ENCODE measurements at regions of chr2 and their contacts with region 1.

Region 1: GRCh38 chr2:40760071-40760666 is 308.3 kb upstream of the SLC8A1 start:
- DNase-seq: peak; percentile 80
- ATAC-seq: peak; percentile 96
- H3K4me3 ChIP-seq: no peak overlapping the region
- H3K27ac ChIP-seq: no peak overlapping the region
- H3K4me1 ChIP-seq: no peaks in the 10 kb centered on the region
- H3K27me3 ChIP-seq: no peaks in the 10 kb centered on the region
- CTCF ChIP-seq: peak; percentile 94

Region 2: DNA sequence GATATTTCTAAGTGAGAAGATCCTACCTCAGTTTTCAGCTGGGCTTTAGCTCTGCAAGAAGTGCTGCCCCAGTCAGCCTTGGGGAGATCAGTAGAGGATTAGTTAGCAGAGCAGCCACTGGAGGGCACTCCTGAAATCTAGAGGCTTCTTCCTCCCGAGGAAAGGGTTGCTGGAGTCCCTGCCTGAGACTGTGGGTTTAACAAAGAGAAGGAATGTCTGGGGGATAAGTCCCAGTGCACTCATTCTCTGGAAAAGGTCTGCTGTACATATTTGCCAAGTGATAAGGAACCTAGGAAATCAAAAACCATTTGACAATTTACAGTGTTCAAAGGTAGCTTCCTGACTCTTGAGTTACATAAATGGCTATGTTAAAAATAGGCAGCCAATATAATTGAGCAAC is 515.5 kb before region 1 on chr2:
- CTCF ChIA-PET with region 1: no interaction called
- POLR2A ChIA-PET with region 1: no interaction called
- intact Hi-C with region 1: loop called (anchors 2 kb)
- DNase-seq: peak; percentile 77
- ATAC-seq: peak; percentile 94
- H3K4me3 ChIP-seq: no peak overlapping the region
- H3K27ac ChIP-seq: no peak overlapping the region
- H3K4me1 ChIP-seq: no peaks in the 10 kb centered on the region
- H3K27me3 ChIP-seq: no peaks in the 10 kb centered on the region
- CTCF ChIP-seq: peak; percentile 80

Region 3: GRCh38 chr2:40448468-40449079 is 311.6 kb before region 1 on chr2:
- CTCF ChIA-PET with region 1: no interaction called
- POLR2A ChIA-PET with region 1: no interaction called
- intact Hi-C with region 1: loop called (anchors 5 kb)
- DNase-seq: peak; percentile 68
- ATAC-seq: no peak
- H3K4me3 ChIP-seq: no peak overlapping the region
- H3K27ac ChIP-seq: no peak overlapping the region
- H3K4me1 ChIP-seq: no peaks in the 10 kb centered on the region
- H3K27me3 ChIP-seq: no peaks in the 10 kb centered on the region
- CTCF ChIP-seq: peak; percentile 84

Region 4: GRCh38 chr2:40488101-40488601 is 272.0 kb before region 1 on chr2:
- CTCF ChIA-PET with region 1: no interaction called
- POLR2A ChIA-PET with region 1: no interaction called
- intact Hi-C with region 1: loop called (anchors 1 kb)
- DNase-seq: peak; percentile 55
- ATAC-seq: peak; percentile 29
- H3K4me3 ChIP-seq: no peak overlapping the region
- H3K27ac ChIP-seq: no peak overlapping the region
- H3K4me1 ChIP-seq: no peaks in the 10 kb centered on the region
- H3K27me3 ChIP-seq: no peaks in the 10 kb centered on the region
- CTCF ChIP-seq: peak; percentile 75

Region 5: DNA sequence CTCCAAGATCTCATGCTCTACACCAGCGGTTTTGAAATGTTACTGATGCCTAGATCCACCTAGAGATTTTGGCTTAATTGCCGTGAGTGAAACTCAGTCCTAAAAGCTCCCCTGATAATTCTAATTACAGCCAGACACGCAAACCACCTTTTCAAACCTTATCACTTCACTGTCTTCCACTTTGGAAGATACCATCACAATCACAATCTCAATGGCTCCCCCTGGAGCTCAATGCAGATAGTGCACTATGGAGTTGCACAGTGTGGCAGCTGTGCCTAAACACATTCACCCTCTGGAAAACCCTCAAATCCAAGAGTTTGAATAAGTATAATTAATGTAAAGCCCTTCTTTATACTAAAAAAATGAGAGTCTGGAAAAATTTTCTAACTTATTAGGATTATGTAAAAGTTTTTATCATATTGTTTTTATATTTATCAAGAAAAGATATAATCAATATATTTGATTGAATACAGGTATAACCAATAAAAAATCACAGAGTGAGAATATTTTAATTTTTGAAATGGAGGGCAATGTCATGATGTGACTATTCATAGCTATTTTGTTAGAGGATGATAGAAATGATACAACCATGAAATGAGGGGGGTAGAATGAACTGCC is 205.4 kb before region 1 on chr2:
- CTCF ChIA-PET with region 1: no interaction called
- POLR2A ChIA-PET with region 1: no interaction called
- intact Hi-C with region 1: loop called (anchors 5 kb)
- DNase-seq: peak; percentile 81
- ATAC-seq: peak; percentile 59; the same call in 1 of the 2 replicates
- H3K4me3 ChIP-seq: no peak overlapping the region
- H3K27ac ChIP-seq: no peak overlapping the region
- H3K4me1 ChIP-seq: peaks cover 11% of the 10 kb centered on the region
- H3K27me3 ChIP-seq: no peaks in the 10 kb centered on the region
- CTCF ChIP-seq: peak; percentile 91

Region 6: GRCh38 chr2:40653829-40654228 is 106.3 kb before region 1 on chr2:
- CTCF ChIA-PET with region 1: interaction called, 3 read pairs
- POLR2A ChIA-PET with region 1: no interaction called
- intact Hi-C with region 1: loop called (anchors 2 kb)
- DNase-seq: peak; percentile 95
- ATAC-seq: peak; percentile 90
- H3K4me3 ChIP-seq: no peak overlapping the region
- H3K27ac ChIP-seq: peak overlapping the region; percentile 81
- H3K4me1 ChIP-seq: peaks cover 31% of the 10 kb centered on the region
- H3K27me3 ChIP-seq: no peaks in the 10 kb centered on the region
- CTCF ChIP-seq: no peak

Region 7: GRCh38 chr2:40700223-40700924 is 59.8 kb before region 1 on chr2:
- CTCF ChIA-PET with region 1: no interaction called
- POLR2A ChIA-PET with region 1: no interaction called
- intact Hi-C with region 1: no loop called
- DNase-seq: no peak
- ATAC-seq: no peak
- H3K4me3 ChIP-seq: no peak overlapping the region
- H3K27ac ChIP-seq: no peak overlapping the region
- H3K4me1 ChIP-seq: peaks cover 6% of the 10 kb centered on the region; the same call in 1 of the 2 replicates
- H3K27me3 ChIP-seq: no peaks in the 10 kb centered on the region
- CTCF ChIP-seq: no peak

Measured in PC-3 (cell line).